Heart right ventricle (tissue), 16 donors: ENCODE measurements at regions of chrX and their contacts with region 1.

Region 1: GRCh38 chrX:2325076-2325784 is 175.5 kb downstream of the DHRSX start:
- DNase-seq: peak; percentile 47 to 59
- ATAC-seq: peak in 7 of 8 donors; percentile 18 to 81 (median 63)
- H3K4me3 ChIP-seq: peak overlapping the region in 8 of 10 donors; percentile 24 to 46 (median 38)
- H3K27ac ChIP-seq: peak overlapping the region in 6 of 10 donors; percentile 22 to 75 (median 55)
- H3K4me1 ChIP-seq: peaks cover 0 to 14% (median 0%) of the 10 kb centered on the region in 9 donors
- H3K27me3 ChIP-seq: no peaks in the 10 kb centered on the region
- CTCF ChIP-seq: no peak

Region 2: DNA sequence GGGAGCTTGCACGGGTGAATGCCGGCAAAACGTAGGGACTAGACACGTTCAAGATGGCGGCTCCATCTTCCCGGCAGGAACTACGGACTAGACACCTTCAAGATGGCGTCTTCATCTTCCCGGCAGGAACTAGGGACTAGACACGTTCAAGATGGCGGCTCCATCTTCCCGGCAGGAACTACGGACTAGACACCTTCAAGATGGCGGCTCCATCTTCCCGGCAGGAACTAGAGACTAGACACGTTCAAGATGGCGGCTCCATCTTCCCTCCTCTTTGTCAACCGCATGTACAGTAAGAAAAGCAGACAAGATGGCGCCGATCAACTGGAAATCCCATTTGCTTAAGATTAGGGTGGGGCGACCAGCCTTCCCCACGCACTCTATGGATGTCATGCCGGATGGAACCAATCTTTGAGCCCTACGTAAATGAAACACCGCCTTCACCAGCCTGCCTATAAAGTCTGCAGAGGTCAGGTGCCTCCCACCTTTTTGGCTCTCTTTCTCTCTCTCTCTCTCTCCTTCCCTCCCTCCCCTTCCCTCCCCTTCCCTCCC is 1335.2 kb before region 1 on chrX:
- intact Hi-C with region 1: loop called in 1 of 10 experiments (anchors 10 kb)
- DNase-seq: peak; percentile 28 to 78
- ATAC-seq: peak; percentile 52 to 98 (median 96)
- H3K4me3 ChIP-seq: peak overlapping the region in 8 of 10 donors; percentile 7 to 38 (median 20)
- H3K27ac ChIP-seq: peak overlapping the region in 1 of 10 donors; percentile 16
- H3K4me1 ChIP-seq: no peaks in the 10 kb centered on the region
- H3K27me3 ChIP-seq: no peaks in the 10 kb centered on the region
- CTCF ChIP-seq: no peak

Region 3: DNA sequence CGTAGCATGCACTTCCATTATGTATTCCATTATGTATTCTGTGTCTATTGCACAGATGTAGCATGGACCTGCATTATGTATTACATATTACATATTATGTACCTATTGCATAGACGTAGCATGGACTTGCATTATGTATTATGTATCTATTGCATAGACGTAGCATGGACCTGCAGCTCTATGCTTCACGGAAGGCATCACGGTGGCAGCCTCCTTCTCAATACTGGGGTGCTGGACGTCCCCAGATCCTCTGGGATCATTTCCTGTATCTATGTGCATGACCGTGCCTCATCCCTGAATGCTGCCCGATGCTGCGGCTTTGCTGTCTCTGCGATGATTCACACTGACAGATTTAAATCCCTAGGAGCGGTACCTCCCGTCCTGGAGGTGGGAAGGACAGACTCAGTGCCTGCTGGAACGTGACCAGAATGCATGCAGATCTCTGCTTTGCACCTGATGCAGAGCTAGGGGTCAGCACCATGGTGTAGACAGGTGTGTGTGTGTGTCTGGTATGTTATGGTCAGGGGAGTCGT is 142.0 kb before region 1 on chrX:
- intact Hi-C with region 1: no loop called
- DNase-seq: no peak
- ATAC-seq: no peak
- H3K4me3 ChIP-seq: no peak overlapping the region
- H3K27ac ChIP-seq: no peak overlapping the region
- H3K4me1 ChIP-seq: no peaks in the 10 kb centered on the region
- H3K27me3 ChIP-seq: no peaks in the 10 kb centered on the region
- CTCF ChIP-seq: no peak

Region 4: DNA sequence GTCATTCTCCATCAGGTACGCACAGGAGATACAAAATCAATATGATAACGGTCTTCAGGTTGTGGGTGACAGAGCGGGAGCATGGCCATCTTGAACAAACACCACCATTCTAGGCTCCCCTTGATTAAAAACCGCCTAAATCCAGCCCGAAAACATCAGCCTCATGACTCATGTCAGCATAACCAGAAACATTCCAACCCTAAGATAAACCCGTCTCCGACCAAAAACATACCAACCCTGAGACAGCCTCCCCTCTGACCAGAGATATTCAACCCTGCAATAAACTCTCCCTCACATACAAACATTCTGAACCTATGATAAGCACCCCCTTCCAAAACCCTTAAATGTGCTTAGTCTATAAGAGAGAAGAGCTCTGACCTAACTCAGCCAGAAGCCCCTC is 17.6 kb after region 1 on chrX:
- intact Hi-C with region 1: loop called in 2 of 10 experiments (anchors 1 to 2 kb)
- DNase-seq: no peak
- ATAC-seq: peak in 3 of 8 donors; percentile 4 to 20 (median 20)
- H3K4me3 ChIP-seq: no peak overlapping the region
- H3K27ac ChIP-seq: peak overlapping the region; percentile 42 to 92 (median 84)
- H3K4me1 ChIP-seq: peaks cover 0 to 15% (median 9%) of the 10 kb centered on the region in 9 donors
- H3K27me3 ChIP-seq: no peaks in the 10 kb centered on the region
- CTCF ChIP-seq: no peak

Region 5: DNA sequence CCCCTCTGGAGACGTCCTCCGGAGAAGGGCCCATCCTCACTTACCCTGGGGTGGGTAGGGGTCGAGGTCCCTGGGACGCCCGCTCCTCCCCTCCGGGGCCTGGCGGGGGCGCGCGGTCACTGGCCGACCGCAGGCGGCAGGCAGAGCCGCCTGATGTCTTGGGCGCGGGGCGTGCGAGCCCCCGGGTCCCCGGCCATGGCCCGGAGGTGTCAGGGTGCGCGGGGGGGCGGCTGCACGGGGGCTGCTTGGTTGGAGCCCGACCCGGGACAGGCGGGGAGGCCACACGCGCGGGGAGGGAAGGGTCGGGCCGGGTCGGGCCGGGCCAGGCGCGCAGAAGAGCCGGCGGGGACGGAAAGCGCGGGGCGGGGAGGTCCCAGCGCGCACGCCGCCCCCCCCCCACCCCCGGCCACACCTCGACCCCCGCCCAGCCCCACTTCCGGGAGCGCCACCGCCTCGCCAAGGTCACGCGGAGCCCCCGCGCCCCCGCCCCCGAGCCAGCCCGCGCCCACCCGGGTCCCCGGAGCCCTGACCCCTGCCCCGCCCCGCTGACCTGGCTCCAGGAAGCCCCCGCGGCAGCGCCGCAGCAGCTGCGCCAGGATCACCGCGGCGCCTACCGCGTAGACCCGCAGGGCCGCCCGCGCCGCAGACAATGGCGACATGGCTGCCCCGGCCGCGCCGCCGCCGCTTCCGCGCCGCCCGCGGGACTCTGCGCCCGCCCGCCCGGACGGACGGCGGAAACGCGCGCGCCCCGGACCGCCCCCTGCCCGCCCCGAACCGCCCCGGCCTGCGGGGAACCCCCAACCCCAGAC is 175.2 kb after region 1 on chrX and contains the starts of genes DHRSX and ZBED1:
- intact Hi-C with region 1: loop called in 1 of 10 experiments (anchors 10 kb)
- DNase-seq: peak; percentile 43 to 67
- ATAC-seq: peak; percentile 44 to 83 (median 61)
- H3K4me3 ChIP-seq: peak within 1 kb of the TSS; percentile 68 to 96 (median 88)
- H3K27ac ChIP-seq: peak within 1 kb of the TSS; percentile 63 to 97 (median 94)
- H3K4me1 ChIP-seq: peaks cover 7 to 42% (median 33%) of the 10 kb centered on the region in 9 donors
- H3K27me3 ChIP-seq: no peaks in the 10 kb centered on the region
- CTCF ChIP-seq: peak in 4 of 9 donors; percentile 21 to 34 (median 30)
- total RNA-seq, gene DHRSX: 21.1 to 35.9 (median 28.5) TPM
- total RNA-seq, gene ZBED1: 41.5 to 60.8 (median 54.4) TPM